ENCODE measurements at regions of chr1 and their contacts with region 1.

Region 1: GRCh38 chr1:192808518-192809306 is at the start of gene RGS2:
- DNase-seq: peak; percentile 89 to 96
- H3K4me3 ChIP-seq: peak within 1 kb of the TSS; percentile 72 to 88
- H3K27ac ChIP-seq: peak within 1 kb of the TSS; percentile 84 to 87
- H3K4me1 ChIP-seq: peaks cover 0 to 18% (median 8%) of the 10 kb centered on the region in 4 donors
- H3K27me3 ChIP-seq: no peaks in the 10 kb centered on the region
- CTCF ChIP-seq: no peak

Region 2: GRCh38 chr1:192477630-192478029 is 331.1 kb before region 1 on chr1:
- intact Hi-C with region 1: loop called (anchors 10 kb)
- DNase-seq: no peak
- H3K4me3 ChIP-seq: no peak overlapping the region
- H3K27ac ChIP-seq: no peak overlapping the region
- H3K4me1 ChIP-seq: peaks cover 0 to 4% (median 0%) of the 10 kb centered on the region in 4 donors
- H3K27me3 ChIP-seq: no peaks in the 10 kb centered on the region
- CTCF ChIP-seq: peak; percentile 56 to 74

Region 3: GRCh38 chr1:192904438-192904895 is 95.8 kb after region 1 on chr1:
- intact Hi-C with region 1: loop called (anchors 10 kb)
- DNase-seq: peak; percentile 34 to 71
- H3K4me3 ChIP-seq: peak overlapping the region; percentile 11 to 38
- H3K27ac ChIP-seq: peak overlapping the region; percentile 54 to 73
- H3K4me1 ChIP-seq: peaks cover 0 to 31% (median 3%) of the 10 kb centered on the region in 4 donors
- H3K27me3 ChIP-seq: no peaks in the 10 kb centered on the region
- CTCF ChIP-seq: no peak

Region 4: GRCh38 chr1:193019442-193020026 is 210.8 kb after region 1 on chr1:
- intact Hi-C with region 1: loop called (anchors 2 kb)
- DNase-seq: no peak
- H3K4me3 ChIP-seq: no peak overlapping the region
- H3K27ac ChIP-seq: no peak overlapping the region
- H3K4me1 ChIP-seq: peaks cover 0 to 2% (median 0%) of the 10 kb centered on the region in 4 donors
- H3K27me3 ChIP-seq: no peaks in the 10 kb centered on the region
- CTCF ChIP-seq: peak; percentile 60 to 63

Region 5: DNA sequence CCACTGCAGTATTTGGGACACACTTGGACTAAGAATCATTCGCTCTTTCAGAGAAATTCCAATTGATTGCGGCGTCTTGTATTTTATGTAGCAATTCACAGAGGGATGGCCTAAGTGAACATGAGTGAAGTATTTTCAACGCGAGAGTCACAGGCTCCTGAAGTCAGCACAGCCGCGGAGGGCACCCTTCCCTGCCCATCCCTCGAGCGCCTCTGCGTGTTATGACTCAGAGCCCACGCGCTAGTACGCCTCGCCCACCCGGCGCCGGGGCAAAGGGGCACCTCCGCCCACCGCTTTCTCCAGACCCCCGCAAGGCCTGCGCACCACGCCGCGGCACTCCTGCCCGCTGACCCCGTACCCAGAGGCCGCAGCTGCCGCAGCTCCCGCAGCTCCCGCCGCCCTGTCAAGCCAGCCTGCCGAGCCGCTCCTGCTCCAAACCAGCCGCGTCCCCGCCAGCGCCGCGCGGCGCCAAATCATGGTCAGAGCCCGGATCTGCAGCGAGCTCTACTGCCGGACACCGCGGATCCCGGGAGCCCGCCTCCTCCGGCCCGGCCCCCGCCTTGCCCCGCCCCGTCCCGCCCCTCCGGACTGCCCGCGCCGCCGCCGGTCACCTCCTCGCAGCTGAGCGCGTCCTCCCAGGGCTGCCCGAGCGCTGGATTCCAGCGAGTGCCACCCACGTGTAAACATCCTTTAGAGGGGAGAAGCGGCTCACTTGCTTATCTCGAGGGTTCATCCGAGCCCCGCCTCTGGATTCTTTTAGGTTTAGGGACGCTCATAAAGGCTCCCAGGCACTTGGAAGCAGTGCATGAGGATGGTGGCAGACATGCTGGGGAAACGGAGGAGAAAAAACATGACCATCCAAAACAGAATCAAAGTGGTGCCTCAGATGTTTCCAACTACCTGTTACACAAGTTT is 296.5 kb after region 1 on chr1 and contains the start of gene GLRX2:
- intact Hi-C with region 1: loop called (anchors 5 kb)
- DNase-seq: peak; percentile 83 to 93
- H3K4me3 ChIP-seq: peak within 1 kb of the TSS; percentile 75 to 80
- H3K27ac ChIP-seq: peak within 1 kb of the TSS; percentile 93
- H3K4me1 ChIP-seq: peaks cover 0 to 25% (median 14%) of the 10 kb centered on the region in 4 donors
- H3K27me3 ChIP-seq: no peaks in the 10 kb centered on the region
- CTCF ChIP-seq: peak in 1 of 2 experiments; percentile 10

Region 6: GRCh38 chr1:193121616-193122593 is 313.2 kb after region 1 on chr1 and contains the start of gene CDC73:
- intact Hi-C with region 1: loop called (anchors 2 kb)
- DNase-seq: peak; percentile 98 to 99
- H3K4me3 ChIP-seq: peak within 1 kb of the TSS; percentile 67 to 80
- H3K27ac ChIP-seq: peak within 1 kb of the TSS; percentile 87 to 97
- H3K4me1 ChIP-seq: peaks cover 0 to 39% (median 15%) of the 10 kb centered on the region in 4 donors
- H3K27me3 ChIP-seq: no peaks in the 10 kb centered on the region
- CTCF ChIP-seq: peak; percentile 87 to 99

Measured in tibial artery (tissue), 4 donors.